HEK293 (cell line): ENCODE measurements at regions of chr11 and their contacts with region 1.

Region 1: DNA sequence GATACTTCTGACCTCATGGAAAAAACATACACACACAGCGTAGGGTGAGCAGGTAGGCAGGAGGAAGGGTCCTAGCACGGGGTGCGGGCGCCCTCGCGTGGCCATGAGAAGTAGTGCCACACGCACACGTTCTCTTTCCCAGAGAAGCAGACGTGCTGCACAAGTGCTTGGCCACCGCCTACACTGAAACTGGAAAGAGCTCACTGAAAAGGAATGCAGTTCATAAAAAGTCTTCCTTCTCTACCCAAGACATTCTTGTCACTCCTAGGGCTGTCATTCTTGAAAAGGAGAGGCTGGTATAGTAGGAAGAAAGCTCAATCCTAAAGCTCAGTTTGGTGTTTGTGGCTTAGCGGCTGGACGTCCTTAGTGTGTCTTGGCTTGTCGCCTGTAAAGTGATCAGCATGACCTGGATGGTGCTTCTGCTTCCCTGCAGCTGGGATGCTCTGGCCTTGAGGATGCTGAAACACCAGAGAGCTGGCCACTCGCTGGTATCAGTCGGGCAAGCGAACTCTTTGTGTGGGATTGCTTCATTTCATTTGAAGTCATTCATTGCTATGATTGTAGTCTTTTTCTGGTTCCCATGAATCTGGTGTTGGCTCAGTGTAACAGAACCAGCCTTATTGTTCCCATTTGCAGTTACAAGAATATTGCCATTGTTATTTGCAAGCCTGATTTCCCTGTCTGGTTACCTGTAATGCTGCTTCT is 303.8 kb downstream of the NTM start:
- H3K4me3 ChIP-seq: no peak overlapping the region
- H3K27ac ChIP-seq: no peak overlapping the region
- H3K4me1 ChIP-seq: no peaks in the 10 kb centered on the region
- CTCF ChIP-seq: peak; percentile 64

Region 2: GRCh38 chr11:131246663-131247062 is 427.5 kb before region 1 on chr11:
- CTCF ChIA-PET with region 1: interaction called, 12 read pairs
- POLR2A ChIA-PET with region 1: no interaction called
- H3K4me3 ChIP-seq: no peak overlapping the region
- H3K27ac ChIP-seq: no peak overlapping the region
- H3K4me1 ChIP-seq: no peaks in the 10 kb centered on the region
- CTCF ChIP-seq: no peak

Region 3: GRCh38 chr11:131544591-131544990 is 129.6 kb before region 1 on chr11:
- CTCF ChIA-PET with region 1: interaction called, 11 read pairs
- POLR2A ChIA-PET with region 1: no interaction called
- H3K4me3 ChIP-seq: no peak overlapping the region
- H3K27ac ChIP-seq: no peak overlapping the region
- H3K4me1 ChIP-seq: no peaks in the 10 kb centered on the region
- CTCF ChIP-seq: no peak

Region 4: GRCh38 chr11:131579932-131580387 is 94.2 kb before region 1 on chr11:
- CTCF ChIA-PET with region 1: interaction called, 42 read pairs
- POLR2A ChIA-PET with region 1: no interaction called
- H3K4me3 ChIP-seq: no peak overlapping the region
- H3K27ac ChIP-seq: no peak overlapping the region
- H3K4me1 ChIP-seq: no peaks in the 10 kb centered on the region
- CTCF ChIP-seq: no peak

Region 5: GRCh38 chr11:131688051-131688698 is 14.0 kb after region 1 on chr11:
- CTCF ChIA-PET with region 1: interaction called, 32 read pairs
- POLR2A ChIA-PET with region 1: no interaction called
- H3K4me3 ChIP-seq: no peak overlapping the region
- H3K27ac ChIP-seq: no peak overlapping the region
- H3K4me1 ChIP-seq: no peaks in the 10 kb centered on the region; the same call in 1 of the 2 replicates
- CTCF ChIP-seq: peak; percentile 35; the same call in 1 of the 2 replicates